ENCODE measurements at regions of chr1 and their contacts with region 1.

Region 1: GRCh38 chr1:116909510-116910378 is at the start of gene PTGFRN:
- DNase-seq: peak; percentile 83 to 91
- ATAC-seq: peak; percentile 84
- H3K4me3 ChIP-seq: peak within 1 kb of the TSS; percentile 73 to 79
- H3K27ac ChIP-seq: peak within 1 kb of the TSS in 1 of 2 donors; percentile 48
- H3K4me1 ChIP-seq: no peaks in the 10 kb centered on the region
- H3K27me3 ChIP-seq: no peaks in the 10 kb centered on the region
- total RNA-seq, gene PTGFRN: 31.9 to 75.0 TPM

Region 2: DNA sequence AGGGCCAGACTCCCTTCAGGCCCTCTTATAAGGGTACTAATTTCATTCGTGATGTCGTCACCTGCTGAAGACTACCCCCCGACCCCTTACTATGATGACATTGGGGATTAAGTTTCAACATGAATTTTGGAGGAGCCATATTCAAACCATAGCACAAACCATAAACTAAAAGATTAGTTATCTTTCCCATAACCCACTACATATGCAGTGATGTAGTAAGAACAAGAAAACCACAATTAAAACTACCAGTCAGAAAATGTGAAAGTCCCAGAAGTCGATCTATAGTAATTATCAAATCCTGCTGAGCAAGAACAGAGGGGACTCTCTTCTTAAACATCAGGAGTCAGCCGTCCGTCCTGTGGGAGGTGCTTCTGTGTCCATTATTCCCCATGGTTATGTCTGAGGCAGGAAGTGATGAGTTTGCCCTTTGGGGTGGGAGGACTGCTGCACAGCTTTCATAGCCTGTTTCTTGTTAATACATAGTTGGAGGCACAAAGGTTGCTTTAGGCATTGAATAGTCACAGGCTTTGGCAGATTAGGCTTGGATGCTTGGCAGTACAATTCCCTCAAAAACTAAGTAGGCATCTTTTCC is 36.0 kb before region 1 on chr1:
- intact Hi-C with region 1: loop called in 1 of 2 experiments (anchors 5 kb)
- DNase-seq: no peak
- ATAC-seq: no peak
- H3K4me3 ChIP-seq: no peak overlapping the region
- H3K27ac ChIP-seq: no peak overlapping the region
- H3K4me1 ChIP-seq: no peaks in the 10 kb centered on the region
- H3K27me3 ChIP-seq: no peaks in the 10 kb centered on the region

Region 3: GRCh38 chr1:116990612-116991151 is 80.9 kb after region 1 on chr1:
- intact Hi-C with region 1: loop called in 1 of 2 experiments (anchors 5 kb)
- DNase-seq: peak; percentile 90 to 91
- ATAC-seq: peak; percentile 92
- H3K4me3 ChIP-seq: no peak overlapping the region
- H3K27ac ChIP-seq: peak overlapping the region in 1 of 2 donors; percentile 46
- H3K4me1 ChIP-seq: peaks cover 0 to 5% of the 10 kb centered on the region in 2 donors
- H3K27me3 ChIP-seq: no peaks in the 10 kb centered on the region